GM18951 (cell line): ENCODE measurements at regions of chrX and their contacts with region 1.

Region 1: GRCh38 chrX:93985344-93986307 is 311.6 kb downstream of the FAM133A start:
- POLR2A ChIP-seq: no peak

Region 2: DNA sequence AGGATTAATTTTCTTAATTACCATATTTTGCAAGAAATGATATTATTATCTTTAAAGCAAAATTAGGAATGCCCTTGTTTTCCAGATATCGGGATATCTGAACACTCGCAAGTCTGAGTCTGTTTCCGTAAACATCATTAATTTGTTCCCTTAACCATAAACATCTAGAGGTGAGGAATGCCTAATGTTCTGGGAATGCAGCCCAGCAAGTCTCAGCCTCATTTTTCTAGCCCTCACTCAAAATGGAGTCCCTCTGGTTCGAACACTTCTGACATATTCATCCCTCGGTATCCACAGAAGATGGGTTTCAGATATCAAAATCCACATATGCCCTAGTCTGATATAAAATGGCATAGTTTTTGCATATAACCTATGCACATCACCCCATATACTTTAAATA is 464.6 kb before region 1 on chrX:
- in situ Hi-C with region 1: loop called (anchors 10 kb)
- POLR2A ChIP-seq: no peak

Region 3: DNA sequence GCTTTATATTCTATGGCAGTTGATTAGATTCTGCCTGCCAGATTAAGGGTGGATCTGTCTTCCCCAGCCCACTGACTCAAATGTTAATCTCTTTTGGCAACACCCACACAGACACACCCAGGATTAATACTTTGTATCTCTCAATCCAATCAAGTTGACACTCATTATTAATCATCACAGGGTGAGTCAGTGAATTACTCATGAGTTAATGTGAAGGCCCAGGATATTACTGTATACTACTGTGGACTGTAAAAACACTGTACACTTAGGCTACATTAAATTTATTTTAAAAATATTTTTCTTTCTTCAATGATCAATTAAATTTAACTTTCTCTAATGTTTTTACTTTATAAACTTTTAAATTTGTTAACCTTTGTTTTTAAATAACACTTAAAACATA is 400.0 kb before region 1 on chrX:
- in situ Hi-C with region 1: no loop called
- POLR2A ChIP-seq: no peak